ENCODE measurements at regions of chr17 and their contacts with region 1.

Region 1: GRCh38 chr17:17289701-17290100 is 8.7 kb upstream of the COPS3 start:
- DNase-seq: no peak
- ATAC-seq: no peak

Region 2: DNA sequence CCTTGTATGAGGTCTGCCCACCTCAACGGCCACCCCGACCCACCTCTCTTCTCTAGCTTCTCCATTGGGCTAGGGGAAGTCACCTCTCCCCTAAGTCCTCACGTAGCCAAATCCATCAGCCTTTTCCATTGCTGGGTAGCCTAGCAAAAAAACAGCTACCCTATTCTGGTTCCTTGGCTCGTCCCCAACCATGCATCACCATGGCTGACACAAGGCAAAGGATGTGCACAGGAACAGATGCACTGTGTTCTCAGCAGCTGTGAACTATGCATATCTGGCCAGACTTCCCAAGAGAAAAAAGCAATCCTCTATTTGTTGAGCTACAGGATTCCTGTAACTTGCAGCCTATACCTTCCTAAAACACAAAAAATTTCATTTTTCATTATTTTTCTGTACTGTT is 30.7 kb before region 1 on chr17:
- intact Hi-C with region 1: loop called (anchors 2 kb)
- DNase-seq: no peak
- ATAC-seq: no peak